T-cell (primary cell): ENCODE measurements at regions of chr11 and their contacts with region 1.

Region 1: GRCh38 chr11:116835791-116836631 is 1.4 kb downstream of the APOA1 start:
- DNase-seq: peak; percentile 64 to 89 (median 77)
- ATAC-seq: peak; percentile 93 to 95 (median 94)
- H3K4me3 ChIP-seq: peak overlapping the region; percentile 51 to 58
- H3K4me3 Mint-ChIP-seq: peak overlapping the region; percentile 74 to 83 (median 77)
- H3K27ac ChIP-seq: no peak overlapping the region
- H3K27ac Mint-ChIP-seq: peak overlapping the region; percentile 46 to 71
- H3K4me1 ChIP-seq: peaks cover 0 to 20% of the 10 kb centered on the region in 2 experiments
- H3K4me1 Mint-ChIP-seq: peaks cover 14 to 18% (median 16%) of the 10 kb centered on the region in 3 donors
- H3K27me3 ChIP-seq: peaks cover 0 to 4% of the 10 kb centered on the region in 2 experiments
- H3K27me3 Mint-ChIP-seq: no peaks in the 10 kb centered on the region

Region 2: DNA sequence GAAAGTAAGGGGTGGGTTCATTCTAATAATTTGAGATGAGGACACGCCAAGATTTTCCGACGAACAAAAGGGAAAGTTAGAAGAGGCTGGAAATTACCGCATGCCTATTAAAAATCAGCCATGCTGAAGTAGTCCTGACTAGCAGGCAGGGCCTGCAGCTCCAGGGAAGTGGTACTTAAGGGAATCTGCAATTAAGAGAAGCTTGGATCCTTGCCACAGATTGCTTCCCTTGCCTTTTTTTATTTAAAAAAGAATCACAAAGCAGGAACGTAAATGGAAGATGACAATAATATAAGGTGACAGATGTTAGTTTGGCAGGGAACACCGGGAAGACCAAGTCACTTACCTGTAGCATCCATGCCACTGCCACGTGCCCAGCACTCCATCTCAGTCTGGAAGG is 1691.1 kb before region 1 on chr11:
- CTCF ChIA-PET with region 1: no interaction called
- POLR2A ChIA-PET with region 1: no interaction called
- DNase-seq: no peak
- ATAC-seq: no peak
- H3K4me3 ChIP-seq: no peak overlapping the region
- H3K4me3 Mint-ChIP-seq: no peak overlapping the region
- H3K27ac ChIP-seq: no peak overlapping the region
- H3K27ac Mint-ChIP-seq: no peak overlapping the region
- H3K4me1 ChIP-seq: no peaks in the 10 kb centered on the region
- H3K4me1 Mint-ChIP-seq: no peaks in the 10 kb centered on the region
- H3K27me3 ChIP-seq: peaks cover 0 to 8% of the 10 kb centered on the region in 2 experiments
- H3K27me3 Mint-ChIP-seq: peaks cover 4 to 8% of the 10 kb centered on the region in 2 donors

Region 3: GRCh38 chr11:115924744-115925567 is 911.1 kb before region 1 on chr11:
- CTCF ChIA-PET with region 1: no interaction called
- POLR2A ChIA-PET with region 1: no interaction called
- DNase-seq: no peak
- ATAC-seq: no peak
- H3K4me3 ChIP-seq: no peak overlapping the region
- H3K4me3 Mint-ChIP-seq: no peak overlapping the region
- H3K27ac ChIP-seq: no peak overlapping the region
- H3K27ac Mint-ChIP-seq: no peak overlapping the region
- H3K4me1 ChIP-seq: no peaks in the 10 kb centered on the region
- H3K4me1 Mint-ChIP-seq: no peaks in the 10 kb centered on the region
- H3K27me3 ChIP-seq: no peaks in the 10 kb centered on the region
- H3K27me3 Mint-ChIP-seq: peaks cover 0 to 2% of the 10 kb centered on the region in 2 donors

Region 4: DNA sequence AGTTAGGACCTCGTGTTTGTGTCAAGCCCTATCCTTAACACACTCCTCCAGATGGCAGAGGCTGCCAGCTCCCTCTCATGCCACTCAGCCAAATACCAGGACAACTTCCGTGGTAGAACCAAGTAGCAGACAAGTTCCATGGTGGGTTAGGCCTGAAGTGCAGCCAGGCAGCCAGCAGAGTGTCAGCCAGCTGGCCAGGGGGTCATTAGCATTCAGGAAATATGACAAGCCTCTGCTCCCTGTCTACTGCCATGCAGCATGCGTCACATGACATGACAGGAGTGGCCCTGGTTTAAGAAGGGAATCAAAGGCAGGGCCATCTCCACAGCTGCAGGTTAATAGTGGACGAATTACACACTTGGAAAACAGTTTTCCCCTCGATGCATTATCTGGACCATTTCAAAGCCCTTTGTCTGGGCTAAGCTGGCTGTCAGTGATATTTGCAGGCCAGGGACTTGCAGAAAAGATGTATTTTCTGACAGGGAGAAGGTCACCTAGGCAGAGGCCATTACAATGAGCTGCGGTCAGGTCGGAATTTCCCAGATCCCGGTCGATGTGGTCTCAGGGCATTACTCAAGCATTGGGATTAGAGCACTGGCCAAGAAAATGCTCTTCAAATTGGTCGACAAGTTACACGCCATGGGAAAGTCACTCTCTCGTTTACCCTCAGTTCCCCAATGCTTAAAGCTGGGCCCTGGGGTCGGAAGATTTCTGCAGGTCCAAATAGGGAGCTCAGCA is 870.1 kb before region 1 on chr11:
- CTCF ChIA-PET with region 1: no interaction called
- POLR2A ChIA-PET with region 1: no interaction called
- DNase-seq: no peak
- ATAC-seq: no peak
- H3K4me3 ChIP-seq: no peak overlapping the region
- H3K4me3 Mint-ChIP-seq: no peak overlapping the region
- H3K27ac ChIP-seq: no peak overlapping the region
- H3K27ac Mint-ChIP-seq: no peak overlapping the region
- H3K4me1 ChIP-seq: no peaks in the 10 kb centered on the region
- H3K4me1 Mint-ChIP-seq: no peaks in the 10 kb centered on the region
- H3K27me3 ChIP-seq: peaks cover 0 to 14% of the 10 kb centered on the region in 2 experiments
- H3K27me3 Mint-ChIP-seq: peaks cover 3% of the 10 kb centered on the region in 2 donors

Region 5: DNA sequence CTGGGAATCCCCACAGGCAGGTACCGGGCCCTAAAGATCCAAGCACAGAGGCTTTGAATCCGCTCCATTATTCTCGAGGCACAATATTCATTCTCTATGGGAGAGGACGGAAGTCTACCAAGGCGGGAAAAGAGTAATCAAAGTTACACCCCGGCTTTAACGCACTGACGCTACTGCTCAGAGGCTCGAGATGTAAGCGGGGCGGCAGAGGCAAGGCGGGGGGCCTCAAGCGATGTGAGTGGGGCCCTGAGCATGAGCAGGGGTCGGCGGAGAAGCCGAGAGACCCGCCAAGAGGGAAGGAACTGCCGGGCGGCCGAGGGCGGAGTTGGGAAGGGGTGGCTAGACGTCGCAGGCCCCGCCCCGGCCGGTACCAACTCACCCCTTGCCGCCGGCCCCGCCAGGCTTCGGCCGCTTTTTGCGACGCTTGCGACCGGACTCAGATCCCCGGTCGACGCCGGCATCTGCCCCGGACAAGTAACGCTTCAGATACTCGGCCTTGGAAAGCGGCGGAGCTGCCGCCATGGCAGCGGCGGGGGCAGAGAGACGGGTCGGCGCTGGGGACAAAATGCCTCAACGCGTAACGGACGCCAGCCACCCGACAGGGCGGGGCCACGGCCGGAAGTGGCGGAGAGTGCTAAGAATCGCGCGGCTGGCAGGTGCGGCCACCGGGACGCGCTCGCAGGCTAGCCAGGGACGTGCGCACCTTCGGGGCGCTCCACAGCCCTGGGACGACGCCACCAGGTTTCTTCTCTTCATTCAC is 63.4 kb before region 1 on chr11 and contains the start of gene BUD13:
- CTCF ChIA-PET with region 1: interaction called in 1 of 2 experiments, 11 read pairs
- POLR2A ChIA-PET with region 1: no interaction called
- DNase-seq: peak; percentile 82 to 97 (median 92)
- ATAC-seq: peak; percentile 92 to 95 (median 94)
- H3K4me3 ChIP-seq: peak within 1 kb of the TSS; percentile 66 to 99
- H3K4me3 Mint-ChIP-seq: peak within 1 kb of the TSS; percentile 91 to 99 (median 98)
- H3K27ac ChIP-seq: peak within 1 kb of the TSS; percentile 85
- H3K27ac Mint-ChIP-seq: peak within 1 kb of the TSS; percentile 98 to 99
- H3K4me1 ChIP-seq: peaks cover 18 to 23% of the 10 kb centered on the region in 2 experiments
- H3K4me1 Mint-ChIP-seq: peaks cover 32 to 39% (median 39%) of the 10 kb centered on the region in 3 donors
- H3K27me3 ChIP-seq: no peaks in the 10 kb centered on the region
- H3K27me3 Mint-ChIP-seq: no peaks in the 10 kb centered on the region
- total RNA-seq, gene BUD13: 9.8 to 23.0 (median 20.5) TPM

Region 6: GRCh38 chr11:116853461-116854073 is 17.6 kb after region 1 on chr11:
- CTCF ChIA-PET with region 1: interaction called, 3 to 20 read pairs
- POLR2A ChIA-PET with region 1: interaction called, 3 to 12 read pairs
- DNase-seq: peak in 34 of 35 experiments; percentile 10 to 85 (median 56)
- ATAC-seq: peak; percentile 96 to 97 (median 96)
- H3K4me3 ChIP-seq: peak overlapping the region; percentile 5 to 44
- H3K4me3 Mint-ChIP-seq: peak overlapping the region; percentile 61 to 68 (median 64)
- H3K27ac ChIP-seq: peak overlapping the region; percentile 87
- H3K27ac Mint-ChIP-seq: peak overlapping the region; percentile 95 to 96
- H3K4me1 ChIP-seq: peaks cover 42 to 62% of the 10 kb centered on the region in 2 experiments
- H3K4me1 Mint-ChIP-seq: peaks cover 79 to 80% (median 80%) of the 10 kb centered on the region in 3 donors
- H3K27me3 ChIP-seq: no peaks in the 10 kb centered on the region
- H3K27me3 Mint-ChIP-seq: no peaks in the 10 kb centered on the region

Region 7: GRCh38 chr11:116948391-116948790 is 112.4 kb after region 1 on chr11:
- CTCF ChIA-PET with region 1: no interaction called
- POLR2A ChIA-PET with region 1: no interaction called
- DNase-seq: no peak
- ATAC-seq: no peak
- H3K4me3 ChIP-seq: no peak overlapping the region
- H3K4me3 Mint-ChIP-seq: no peak overlapping the region
- H3K27ac ChIP-seq: no peak overlapping the region
- H3K27ac Mint-ChIP-seq: no peak overlapping the region
- H3K4me1 ChIP-seq: no peaks in the 10 kb centered on the region
- H3K4me1 Mint-ChIP-seq: peaks cover 21 to 34% (median 25%) of the 10 kb centered on the region in 3 donors
- H3K27me3 ChIP-seq: no peaks in the 10 kb centered on the region
- H3K27me3 Mint-ChIP-seq: no peaks in the 10 kb centered on the region